Mammary epithelial cell (primary cell): ENCODE measurements at regions of chr6 and their contacts with region 1.

Region 1: GRCh38 chr6:75208298-75209183 is 2.7 kb upstream of the COL12A1 start:
- DNase-seq: peak; percentile 71
- H3K4me3 ChIP-seq: no peak overlapping the region
- H3K27ac ChIP-seq: no peak overlapping the region
- H3K4me1 ChIP-seq: peaks cover 9% of the 10 kb centered on the region
- H3K27me3 ChIP-seq: no peaks in the 10 kb centered on the region
- CTCF ChIP-seq: peak; percentile 86 to 90

Region 2: DNA sequence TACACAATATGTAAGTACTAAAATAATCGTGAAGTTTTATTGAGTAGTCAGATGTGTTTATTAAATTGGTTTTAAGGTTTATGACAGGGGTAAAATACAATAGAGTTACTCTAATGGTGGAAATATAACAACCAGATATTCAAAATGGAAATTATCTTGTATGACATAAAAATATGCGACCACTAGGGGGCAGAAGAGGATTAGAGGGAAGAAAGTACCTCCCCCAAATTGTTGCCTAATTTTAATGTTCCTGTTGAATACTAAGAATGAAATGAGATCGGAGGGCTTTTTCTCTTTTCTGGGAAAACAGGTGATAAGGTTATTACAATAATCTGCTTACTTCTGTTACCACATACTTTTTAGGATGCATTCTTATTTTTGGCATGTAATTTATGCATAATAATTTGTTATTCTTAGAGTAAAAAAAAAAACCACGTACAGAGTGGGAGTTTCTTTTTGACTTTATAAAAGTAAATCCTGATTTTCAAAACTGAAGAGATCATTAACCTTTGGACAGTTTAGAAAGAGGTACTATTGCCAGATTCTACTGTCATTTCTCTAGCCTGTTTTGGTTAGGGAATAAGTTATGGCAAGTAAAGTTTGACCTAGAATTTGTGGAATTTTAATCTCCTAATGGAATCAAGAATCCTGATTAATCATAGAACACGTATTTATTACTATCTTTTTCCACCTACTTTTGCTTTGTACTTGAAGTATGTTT is 1353.4 kb before region 1 on chr6:
- CTCF ChIA-PET with region 1: interaction called, 7 read pairs
- dilution Hi-C with region 1: loop called (anchors 25 kb)
- in situ Hi-C with region 1: no loop called
- intact Hi-C with region 1: loop called (anchors 1 kb)
- DNase-seq: peak; percentile 41
- H3K4me3 ChIP-seq: no peak overlapping the region
- H3K27ac ChIP-seq: no peak overlapping the region
- H3K4me1 ChIP-seq: no peaks in the 10 kb centered on the region
- H3K27me3 ChIP-seq: no peaks in the 10 kb centered on the region
- CTCF ChIP-seq: peak; percentile 67 to 69

Region 3: DNA sequence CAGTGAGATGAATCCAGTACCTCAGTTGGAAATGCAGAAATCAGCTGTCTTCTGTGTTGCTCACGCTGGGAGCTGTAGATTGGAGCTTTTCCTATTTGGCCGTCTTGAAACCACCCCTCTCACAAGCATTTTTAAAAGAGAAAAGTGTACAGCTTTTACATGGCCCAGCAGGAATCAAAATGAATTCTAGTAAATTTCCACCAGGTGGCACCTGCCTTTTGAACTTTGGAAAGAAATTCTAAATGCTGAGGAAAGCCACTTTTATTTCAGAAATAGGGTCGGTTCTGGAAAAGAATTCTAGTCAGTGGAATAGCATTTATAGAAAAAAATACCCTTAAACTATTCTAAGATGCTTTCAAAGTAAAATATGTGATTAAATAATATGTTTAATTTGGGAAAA is 864.7 kb before region 1 on chr6:
- CTCF ChIA-PET with region 1: interaction called, 8 read pairs
- dilution Hi-C with region 1: no loop called
- in situ Hi-C with region 1: no loop called
- intact Hi-C with region 1: loop called (anchors 1 kb)
- DNase-seq: no peak
- H3K4me3 ChIP-seq: no peak overlapping the region
- H3K27ac ChIP-seq: no peak overlapping the region
- H3K4me1 ChIP-seq: no peaks in the 10 kb centered on the region
- H3K27me3 ChIP-seq: no peaks in the 10 kb centered on the region
- CTCF ChIP-seq: peak; percentile 19 to 53

Region 4: DNA sequence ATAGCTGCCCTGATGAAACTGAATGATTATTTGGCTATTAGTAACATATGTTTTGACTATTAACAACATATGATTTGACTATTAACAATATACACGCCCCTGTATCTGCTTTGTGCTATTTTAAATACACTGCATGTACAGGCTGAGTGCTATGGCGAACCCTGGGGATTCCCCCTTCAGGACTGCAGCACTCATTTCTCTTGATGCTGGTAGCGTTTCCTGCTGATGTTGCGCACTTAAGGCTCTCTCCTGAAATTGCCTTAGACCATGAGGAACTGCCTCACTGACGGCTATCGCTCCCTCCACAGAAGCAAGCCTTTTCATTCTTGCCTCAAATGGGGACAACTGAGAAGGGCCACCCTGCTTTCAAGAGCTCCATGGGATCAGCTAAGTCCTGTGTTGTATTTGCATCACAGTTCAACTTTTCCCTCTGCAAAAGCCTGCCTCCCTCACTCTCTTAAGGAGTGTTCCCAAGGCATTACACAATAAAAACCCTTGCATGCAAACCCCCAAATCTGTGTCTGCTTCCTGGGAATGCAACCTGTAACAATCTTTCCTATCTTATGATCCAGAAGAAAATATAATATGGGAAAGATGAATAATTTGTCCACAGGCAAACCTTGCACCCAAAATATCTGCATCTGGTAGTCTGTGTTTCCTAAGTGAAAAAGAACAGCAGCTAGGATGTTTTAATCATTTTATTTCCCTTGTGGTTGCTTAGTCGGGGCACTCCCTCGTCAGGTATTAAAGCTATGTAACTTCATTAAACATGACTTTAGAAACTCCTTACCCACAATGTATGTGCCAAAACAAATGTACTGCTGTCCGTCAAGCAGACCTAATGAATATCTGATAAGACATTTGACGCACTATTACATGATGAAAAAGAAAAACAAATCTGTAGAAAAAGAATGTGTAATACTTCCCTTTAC is 459.1 kb before region 1 on chr6:
- CTCF ChIA-PET with region 1: no interaction called
- dilution Hi-C with region 1: no loop called
- in situ Hi-C with region 1: no loop called
- intact Hi-C with region 1: loop called (anchors 10 kb)
- DNase-seq: peak; percentile 78
- H3K4me3 ChIP-seq: no peak overlapping the region
- H3K27ac ChIP-seq: peak overlapping the region; percentile 53
- H3K4me1 ChIP-seq: peaks cover 25% of the 10 kb centered on the region
- H3K27me3 ChIP-seq: no peaks in the 10 kb centered on the region
- CTCF ChIP-seq: no peak

Region 5: DNA sequence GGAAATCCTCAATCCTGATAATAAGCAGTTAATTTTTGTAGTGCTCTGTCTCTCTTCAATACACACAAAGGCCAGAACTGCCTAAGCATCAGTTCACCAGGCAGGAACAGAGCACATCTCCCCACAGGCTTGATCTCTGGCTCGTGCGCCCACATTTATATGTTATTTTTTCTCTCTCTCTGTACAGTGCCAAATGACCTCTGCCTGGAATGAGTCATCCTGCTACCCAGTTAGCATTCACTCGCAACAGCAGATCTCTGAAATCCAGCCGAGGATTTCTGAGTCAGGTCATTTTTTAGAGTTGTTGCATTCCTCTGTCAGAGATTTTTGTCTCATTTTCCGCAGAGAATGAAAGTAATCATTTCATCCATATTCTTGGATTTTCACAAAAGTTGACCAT is 109.8 kb before region 1 on chr6:
- CTCF ChIA-PET with region 1: interaction called, 6 read pairs
- dilution Hi-C with region 1: no loop called
- in situ Hi-C with region 1: no loop called
- intact Hi-C with region 1: loop called (anchors 2 kb)
- DNase-seq: peak; percentile 80
- H3K4me3 ChIP-seq: no peak overlapping the region
- H3K27ac ChIP-seq: no peak overlapping the region
- H3K4me1 ChIP-seq: peaks cover 11% of the 10 kb centered on the region
- H3K27me3 ChIP-seq: no peaks in the 10 kb centered on the region
- CTCF ChIP-seq: no peak

Region 6: GRCh38 chr6:75526502-75527127 is 318.1 kb after region 1 on chr6:
- CTCF ChIA-PET with region 1: no interaction called
- dilution Hi-C with region 1: no loop called
- in situ Hi-C with region 1: no loop called
- intact Hi-C with region 1: loop called (anchors 1 kb)
- DNase-seq: peak; percentile 55
- H3K4me3 ChIP-seq: no peak overlapping the region
- H3K27ac ChIP-seq: no peak overlapping the region
- H3K4me1 ChIP-seq: no peaks in the 10 kb centered on the region
- H3K27me3 ChIP-seq: no peaks in the 10 kb centered on the region
- CTCF ChIP-seq: peak; percentile 63 to 75